ENCODE measurements at regions of chr4 and their contacts with region 1.

Region 1: DNA sequence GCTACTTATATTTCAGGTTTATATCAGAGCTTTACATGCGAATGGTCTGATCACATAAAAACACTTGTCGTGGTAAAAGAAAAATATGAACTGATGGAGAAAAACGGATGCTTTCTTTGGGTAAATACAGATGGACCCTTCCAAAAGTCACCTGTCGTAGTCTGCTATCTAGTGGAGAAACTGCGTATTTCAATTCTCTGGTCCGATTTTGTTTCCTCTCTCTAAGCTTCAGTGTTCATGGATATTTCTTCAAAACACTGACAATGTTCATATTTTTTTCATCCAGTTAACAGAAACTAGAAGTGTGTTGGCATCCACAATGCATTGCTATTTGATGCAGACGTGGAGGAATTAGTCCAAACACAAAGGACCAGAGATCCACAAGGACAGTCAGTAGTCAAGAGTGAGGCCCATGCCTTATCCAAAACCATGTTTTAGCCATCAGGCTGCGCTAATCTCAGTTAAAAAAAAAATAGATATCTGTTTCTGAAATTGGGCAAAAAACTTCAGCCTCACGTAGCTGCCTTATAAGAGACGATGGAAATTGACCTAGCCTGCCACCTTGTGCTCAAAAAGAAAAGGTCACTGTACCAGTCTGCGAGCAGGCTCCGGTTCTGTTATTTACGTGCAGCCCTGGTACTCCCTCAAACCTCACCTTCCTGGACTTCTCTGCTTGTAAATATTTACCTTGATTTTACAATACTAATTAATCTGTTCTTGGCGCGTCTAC is 16.0 kb downstream of the MEPE start:
- DNase-seq: peak; percentile 33
- H3K4me3 ChIP-seq: peak overlapping the region in 1 of 3 experiments; percentile 19
- H3K27ac ChIP-seq: no peak overlapping the region
- H3K4me1 ChIP-seq: peaks cover 7% of the 10 kb centered on the region
- H3K27me3 ChIP-seq: no peaks in the 10 kb centered on the region
- CTCF ChIP-seq: peak; percentile 55 to 74

Region 2: DNA sequence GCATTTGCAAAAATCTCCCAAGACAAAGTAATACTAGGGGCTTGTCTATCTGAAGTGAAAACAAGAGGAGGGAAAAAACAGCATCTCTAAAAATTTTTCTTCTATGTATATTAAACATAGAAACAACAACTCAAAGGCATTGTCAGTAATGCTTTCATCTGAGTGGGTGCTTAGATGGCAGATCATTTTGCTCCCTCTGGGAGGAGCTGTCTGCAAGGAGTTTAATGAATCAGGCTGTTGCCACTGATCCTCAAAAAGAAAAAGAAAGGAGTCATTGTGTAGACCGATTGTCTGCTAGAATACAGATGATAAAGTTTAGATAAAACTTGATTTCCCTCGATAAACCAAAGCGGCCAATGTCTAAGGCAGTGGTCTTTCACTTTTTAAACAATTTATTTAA is 578.6 kb before region 1 on chr4:
- CTCF ChIA-PET with region 1: no interaction called
- dilution Hi-C with region 1: no loop called
- in situ Hi-C with region 1: loop called in 1 of 2 experiments (anchors 10 kb)
- intact Hi-C with region 1: loop called (anchors 5 kb)
- DNase-seq: peak; percentile 26
- H3K4me3 ChIP-seq: no peak overlapping the region
- H3K27ac ChIP-seq: no peak overlapping the region
- H3K4me1 ChIP-seq: no peaks in the 10 kb centered on the region
- H3K27me3 ChIP-seq: peaks cover 6% of the 10 kb centered on the region
- CTCF ChIP-seq: peak; percentile 65 to 73

Region 3: DNA sequence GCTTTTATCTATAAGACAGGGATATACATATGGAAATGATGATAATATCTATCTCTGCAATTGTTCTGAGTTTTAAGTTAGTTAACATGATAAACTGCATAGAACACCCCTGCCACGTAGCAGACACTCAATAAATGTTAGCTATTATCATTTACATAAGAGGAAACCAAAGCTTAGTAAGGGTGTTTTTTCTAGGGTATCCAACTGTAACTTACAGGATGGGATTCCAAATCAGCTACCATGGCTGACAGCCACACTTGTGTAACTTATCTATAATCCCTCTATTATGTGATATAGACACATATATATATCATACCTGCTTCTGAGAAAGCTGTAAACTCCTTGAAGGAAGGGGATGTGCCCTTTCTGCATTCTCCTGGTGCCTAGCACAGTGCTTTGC is 318.6 kb before region 1 on chr4:
- CTCF ChIA-PET with region 1: interaction called, 12 read pairs
- dilution Hi-C with region 1: no loop called
- in situ Hi-C with region 1: no loop called
- intact Hi-C with region 1: no loop called
- DNase-seq: no peak
- H3K4me3 ChIP-seq: no peak overlapping the region
- H3K27ac ChIP-seq: no peak overlapping the region
- H3K4me1 ChIP-seq: peaks cover 31% of the 10 kb centered on the region
- H3K27me3 ChIP-seq: no peaks in the 10 kb centered on the region
- CTCF ChIP-seq: no peak

Region 4: GRCh38 chr4:87679449-87680169 is 169.2 kb before region 1 on chr4:
- CTCF ChIA-PET with region 1: interaction called, 3 read pairs
- dilution Hi-C with region 1: no loop called
- in situ Hi-C with region 1: no loop called
- intact Hi-C with region 1: loop called (anchors 1 kb)
- DNase-seq: peak; percentile 3
- H3K4me3 ChIP-seq: no peak overlapping the region
- H3K27ac ChIP-seq: no peak overlapping the region
- H3K4me1 ChIP-seq: no peaks in the 10 kb centered on the region
- H3K27me3 ChIP-seq: no peaks in the 10 kb centered on the region
- CTCF ChIP-seq: peak; percentile 73 to 79

Region 5: GRCh38 chr4:87985097-87985886 is 136.5 kb after region 1 on chr4:
- CTCF ChIA-PET with region 1: interaction called, 12 read pairs
- dilution Hi-C with region 1: no loop called
- in situ Hi-C with region 1: no loop called
- intact Hi-C with region 1: loop called (anchors 1 kb)
- DNase-seq: peak; percentile 57
- H3K4me3 ChIP-seq: no peak overlapping the region
- H3K27ac ChIP-seq: no peak overlapping the region
- H3K4me1 ChIP-seq: no peaks in the 10 kb centered on the region
- H3K27me3 ChIP-seq: no peaks in the 10 kb centered on the region
- CTCF ChIP-seq: peak; percentile 85 to 95

Region 6: DNA sequence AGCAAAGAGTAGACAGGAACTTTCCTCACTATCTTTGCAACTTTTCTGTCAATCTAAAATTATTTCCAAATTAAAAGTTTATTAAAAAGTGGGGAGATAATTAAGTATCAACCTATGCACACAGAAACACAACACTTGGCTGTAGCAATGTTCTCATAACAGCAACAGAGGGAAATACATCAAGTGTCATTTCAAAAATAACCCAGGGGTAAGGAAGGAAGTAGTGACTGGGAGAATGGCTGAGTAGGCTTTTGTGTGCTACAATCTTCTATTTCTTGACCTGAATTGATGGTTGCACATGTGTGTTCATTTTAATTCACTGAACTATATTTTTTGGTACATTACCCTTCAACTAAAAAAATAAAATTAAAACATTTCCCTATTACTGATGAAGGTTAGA is 242.1 kb after region 1 on chr4:
- CTCF ChIA-PET with region 1: no interaction called
- dilution Hi-C with region 1: no loop called
- in situ Hi-C with region 1: no loop called
- intact Hi-C with region 1: no loop called
- DNase-seq: no peak
- H3K4me3 ChIP-seq: no peak overlapping the region
- H3K27ac ChIP-seq: no peak overlapping the region
- H3K4me1 ChIP-seq: no peaks in the 10 kb centered on the region
- H3K27me3 ChIP-seq: no peaks in the 10 kb centered on the region
- CTCF ChIP-seq: no peak

Region 7: DNA sequence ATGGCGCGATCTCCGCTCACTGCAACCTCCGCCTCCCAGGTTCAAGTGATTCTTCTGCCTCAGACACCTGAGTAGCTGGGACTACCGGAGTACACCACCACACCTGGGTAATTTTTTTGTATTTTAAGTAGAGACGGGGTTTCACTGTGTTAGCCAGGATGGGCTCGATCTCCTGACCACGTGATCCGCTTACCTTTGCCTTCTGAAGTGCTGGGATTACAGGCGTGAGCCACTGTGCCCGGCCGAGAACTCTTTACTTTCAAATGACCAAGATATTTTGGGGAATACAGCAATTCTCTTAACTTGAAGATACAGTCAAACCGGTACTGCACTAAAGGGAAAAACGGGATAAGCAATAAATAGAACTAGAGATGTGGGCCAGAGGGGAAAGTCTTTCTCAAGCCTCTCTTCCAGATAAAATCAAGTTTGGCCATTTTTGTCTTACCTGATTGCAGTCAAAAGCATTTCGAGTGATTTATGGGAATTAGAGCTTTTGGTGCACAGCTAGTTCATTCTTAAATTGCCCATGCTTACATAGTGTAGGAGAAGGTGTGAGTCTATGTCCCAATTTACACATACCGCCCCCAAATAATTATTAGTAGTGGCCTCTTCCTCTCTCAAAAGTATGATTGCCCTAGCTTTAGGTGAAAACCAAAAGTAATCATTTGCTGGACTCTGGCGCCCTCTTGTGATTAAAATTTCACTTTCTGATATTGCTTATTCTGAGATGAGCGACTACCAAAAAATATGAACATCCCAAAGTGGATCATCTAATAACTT is 362.9 kb after region 1 on chr4:
- CTCF ChIA-PET with region 1: interaction called, 3 read pairs
- dilution Hi-C with region 1: no loop called
- in situ Hi-C with region 1: loop called (anchors 10 kb)
- intact Hi-C with region 1: loop called (anchors 1 kb)
- DNase-seq: peak; percentile 45
- H3K4me3 ChIP-seq: no peak overlapping the region
- H3K27ac ChIP-seq: no peak overlapping the region
- H3K4me1 ChIP-seq: no peaks in the 10 kb centered on the region
- H3K27me3 ChIP-seq: no peaks in the 10 kb centered on the region
- CTCF ChIP-seq: peak; percentile 59 to 66

Region 8: GRCh38 chr4:88523325-88524129 is 674.7 kb after region 1 on chr4 and contains the start of gene PYURF:
- CTCF ChIA-PET with region 1: no interaction called
- dilution Hi-C with region 1: no loop called
- in situ Hi-C with region 1: loop called (anchors 25 kb)
- intact Hi-C with region 1: loop called (anchors 5 kb)
- DNase-seq: peak; percentile 92
- H3K4me3 ChIP-seq: peak within 1 kb of the TSS; percentile 92 to 99 (median 94)
- H3K27ac ChIP-seq: peak within 1 kb of the TSS; percentile 78
- H3K4me1 ChIP-seq: peaks cover 11% of the 10 kb centered on the region
- H3K27me3 ChIP-seq: no peaks in the 10 kb centered on the region
- CTCF ChIP-seq: peak in 1 of 2 donors; percentile 8
- total RNA-seq, gene PYURF: 48.7 to 65.1 TPM

Measured in mammary epithelial cell (primary cell).